ENCODE measurements at regions of chr13 and their contacts with region 1.

Region 1: GRCh38 chr13:97109841-97110492 is 112.2 kb upstream of the MBNL2 start:
- DNase-seq: peak; percentile 79
- H3K4me3 Mint-ChIP-seq: peak overlapping the region; percentile 14
- H3K27ac Mint-ChIP-seq: no peak overlapping the region
- H3K4me1 Mint-ChIP-seq: peaks cover 11% of the 10 kb centered on the region
- H3K27me3 Mint-ChIP-seq: peaks cover 12% of the 10 kb centered on the region

Region 2: GRCh38 chr13:97174638-97175037 is 64.7 kb after region 1 on chr13:
- CTCF ChIA-PET with region 1: no interaction called
- intact Hi-C with region 1: no loop called
- DNase-seq: no peak
- H3K4me3 Mint-ChIP-seq: no peak overlapping the region
- H3K27ac Mint-ChIP-seq: no peak overlapping the region
- H3K4me1 Mint-ChIP-seq: no peaks in the 10 kb centered on the region
- H3K27me3 Mint-ChIP-seq: peaks cover 4% of the 10 kb centered on the region

Region 3: DNA sequence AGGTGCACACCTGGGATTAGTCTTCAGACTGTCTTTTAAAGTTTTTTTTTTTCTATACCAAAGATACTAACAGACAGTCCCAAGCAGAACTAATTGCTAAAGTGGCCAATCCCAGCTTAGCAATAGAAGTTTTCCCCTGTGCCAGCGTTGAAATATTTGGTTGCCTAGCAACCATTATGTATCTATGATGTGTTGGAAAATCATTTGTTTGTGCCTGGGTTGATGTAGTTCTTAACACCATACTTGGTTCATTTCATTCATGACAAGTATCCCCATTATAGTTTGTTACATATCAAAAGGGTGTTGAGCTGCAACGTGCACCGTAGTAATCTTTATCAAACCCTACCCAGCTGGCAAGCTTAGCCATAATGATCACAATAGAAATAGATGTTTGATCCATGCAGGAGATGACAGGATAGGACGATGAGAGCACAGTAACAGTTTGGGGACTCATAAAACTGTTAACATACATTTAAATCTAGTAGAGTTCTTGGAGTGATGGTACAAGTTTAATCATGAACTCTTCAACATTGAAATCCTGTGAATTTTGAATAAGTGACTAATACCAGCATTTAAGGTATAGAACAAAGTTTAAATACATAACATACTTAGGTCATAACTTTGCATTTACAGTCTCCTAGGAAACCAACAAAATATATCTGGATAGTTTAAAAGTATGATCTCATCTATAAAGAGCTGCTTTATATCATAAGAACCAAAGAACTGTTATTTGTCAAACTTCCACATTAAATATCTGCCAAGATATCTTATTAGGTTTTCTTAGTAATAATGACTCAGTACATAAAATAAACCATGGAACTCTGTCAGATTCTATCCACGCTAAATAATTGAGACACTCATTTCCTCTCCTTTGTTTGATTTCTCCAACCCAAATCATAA is 185.6 kb after region 1 on chr13:
- CTCF ChIA-PET with region 1: interaction called, 10 read pairs
- intact Hi-C with region 1: no loop called
- DNase-seq: no peak
- H3K4me3 Mint-ChIP-seq: no peak overlapping the region
- H3K27ac Mint-ChIP-seq: no peak overlapping the region
- H3K4me1 Mint-ChIP-seq: peaks cover 31% of the 10 kb centered on the region
- H3K27me3 Mint-ChIP-seq: no peaks in the 10 kb centered on the region

Region 4: DNA sequence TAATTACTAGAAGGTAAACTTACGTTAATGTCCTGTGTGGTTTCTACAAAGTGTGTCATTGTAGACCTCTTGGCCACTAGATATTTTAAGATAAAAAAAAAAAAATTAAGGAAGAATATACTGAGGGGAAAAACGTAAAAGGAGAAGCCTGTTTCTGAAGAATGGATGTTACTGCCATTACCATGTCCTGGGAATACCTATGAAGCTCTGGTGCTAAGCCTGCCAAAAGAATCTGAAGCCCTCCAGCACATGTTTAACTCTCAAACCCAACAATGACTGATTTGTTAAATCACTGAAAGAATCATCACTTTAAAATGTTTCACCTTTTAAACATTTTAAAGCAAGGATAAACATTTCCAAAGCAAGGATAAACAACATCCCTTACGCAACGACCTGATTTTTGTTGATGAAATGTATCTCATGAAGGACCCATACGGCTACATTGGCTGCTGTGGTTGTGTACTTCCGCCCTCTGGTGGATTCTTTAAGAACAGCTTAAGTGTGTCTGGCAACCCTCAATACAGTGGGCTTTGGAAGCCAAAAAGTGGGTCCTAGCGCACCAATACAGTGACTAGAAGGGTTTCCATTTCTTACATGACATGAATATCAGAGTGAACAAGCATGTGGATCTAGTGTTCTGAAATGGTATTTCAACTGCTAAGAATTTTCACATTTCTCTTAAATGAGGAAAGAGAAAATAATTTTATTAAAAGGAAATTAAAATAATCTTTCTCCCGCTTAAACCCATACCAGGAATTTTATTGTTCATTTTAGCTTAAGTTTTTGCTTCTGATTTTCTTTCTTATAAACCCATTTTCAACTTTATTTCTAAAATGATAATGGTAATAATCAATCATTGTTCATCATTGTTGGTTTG is 249.5 kb after region 1 on chr13:
- CTCF ChIA-PET with region 1: interaction called, 132 read pairs
- intact Hi-C with region 1: loop called (anchors 1 kb)
- DNase-seq: peak; percentile 60
- H3K4me3 Mint-ChIP-seq: no peak overlapping the region
- H3K27ac Mint-ChIP-seq: no peak overlapping the region
- H3K4me1 Mint-ChIP-seq: no peaks in the 10 kb centered on the region
- H3K27me3 Mint-ChIP-seq: no peaks in the 10 kb centered on the region

Region 5: GRCh38 chr13:97574926-97575325 is 465.0 kb after region 1 on chr13:
- CTCF ChIA-PET with region 1: interaction called, 3 read pairs
- intact Hi-C with region 1: loop called (anchors 1 kb)
- DNase-seq: peak; percentile 51
- H3K4me3 Mint-ChIP-seq: no peak overlapping the region
- H3K27ac Mint-ChIP-seq: no peak overlapping the region
- H3K4me1 Mint-ChIP-seq: no peaks in the 10 kb centered on the region
- H3K27me3 Mint-ChIP-seq: peaks cover 6% of the 10 kb centered on the region

Measured in activated naive CD4-positive, alpha-beta T cell treated with anti-CD3 and anti-CD28 coated beads for 36 hours (primary cell).